Posterior vena cava (tissue), 2 donors: ENCODE measurements at regions of chr12 and their contacts with region 1.

Region 1: GRCh38 chr12:88313554-88313953 is 171.4 kb downstream of the TMTC3 start:
- DNase-seq: no peak

Region 2: GRCh38 chr12:88218293-88218692 is 95.3 kb before region 1 on chr12:
- intact Hi-C with region 1: no loop called
- DNase-seq: no peak

Region 3: DNA sequence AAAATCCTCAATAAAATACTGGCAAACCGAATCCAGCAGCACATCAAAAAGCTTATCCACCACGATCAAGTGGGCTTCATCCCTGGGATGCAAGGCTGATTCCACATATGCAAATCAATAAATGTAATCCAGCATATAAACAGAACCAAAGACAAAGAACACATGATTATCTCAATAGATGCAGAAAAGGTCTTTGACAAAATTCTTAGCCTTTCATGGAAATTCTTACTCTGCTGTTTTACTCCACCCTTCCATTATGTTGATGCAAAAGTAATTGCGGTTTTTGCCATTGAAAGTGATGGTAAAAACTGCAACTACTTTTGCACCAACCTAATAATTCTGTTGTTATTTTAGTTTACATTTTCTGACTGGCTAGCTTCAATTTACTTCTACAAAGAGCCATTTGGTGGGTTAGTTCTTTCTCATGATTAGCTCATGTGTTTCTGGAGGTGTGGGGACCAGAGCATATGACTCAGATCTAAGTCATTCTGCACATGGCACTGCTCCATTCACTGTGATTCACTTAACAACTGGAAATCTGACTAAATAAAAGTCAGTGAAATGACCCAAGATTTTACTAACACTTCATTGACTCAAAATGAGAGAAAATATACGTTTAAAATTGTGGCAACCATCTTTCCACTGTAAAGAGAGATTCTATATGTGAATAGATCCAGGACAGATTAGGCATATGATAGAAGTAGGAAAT is 71.5 kb before region 1 on chr12:
- intact Hi-C with region 1: loop called in 1 of 2 experiments (anchors 2 kb)
- DNase-seq: no peak